ENCODE measurements at regions of chr7 and their contacts with region 1.

Region 1: DNA sequence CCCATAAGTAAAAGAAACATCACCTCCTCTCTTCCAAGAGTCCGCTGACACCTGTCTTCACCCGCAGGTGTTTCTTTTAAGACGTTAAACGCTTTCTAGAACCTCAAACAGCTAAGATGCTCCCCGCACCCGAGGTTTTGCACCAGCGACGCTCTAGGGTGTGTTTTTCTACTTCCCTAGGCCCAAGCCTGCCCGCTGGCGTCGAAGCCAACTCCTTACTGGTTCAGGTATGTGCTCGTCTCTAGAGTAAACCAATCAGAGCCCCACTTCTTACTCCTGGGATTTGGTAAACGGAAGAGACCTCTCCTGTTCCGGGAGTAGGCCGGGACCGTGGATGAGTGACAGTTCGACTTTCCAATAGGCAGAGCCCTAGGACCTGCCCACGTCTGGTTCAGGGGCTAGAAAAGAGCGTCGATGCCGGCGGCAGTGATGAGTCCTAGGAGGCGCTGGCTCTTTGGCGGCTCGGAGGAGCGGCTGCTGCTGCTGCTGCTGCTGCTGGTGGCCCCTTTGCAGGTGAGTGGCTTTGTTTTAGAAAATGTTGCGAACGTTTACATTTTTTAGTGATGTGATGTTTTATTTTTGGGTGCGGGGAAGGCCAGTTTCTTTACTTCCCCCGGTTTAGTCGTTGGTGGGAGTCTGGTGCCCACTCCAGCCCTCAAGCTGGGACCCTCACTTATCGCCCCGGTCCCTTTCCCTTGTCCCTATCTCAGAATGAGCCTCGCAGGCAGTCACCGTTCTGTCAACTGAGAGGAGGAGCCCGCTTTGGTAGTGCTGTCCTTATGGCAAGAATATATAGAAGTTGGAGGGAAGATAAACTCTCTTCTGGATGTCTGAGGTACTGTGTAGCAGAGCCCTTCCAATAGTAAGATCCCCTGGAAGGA is at the start of gene BPGM:
- DNase-seq: peak; percentile 99
- ATAC-seq: peak; percentile 94
- H3K4me3 ChIP-seq: peak within 1 kb of the TSS; percentile 70 to 93 (median 79)
- H3K4me3 Mint-ChIP-seq: no peak within 1 kb of the TSS
- H3K27ac ChIP-seq: peak within 1 kb of the TSS; percentile 84 to 85
- H3K27ac Mint-ChIP-seq: no peak within 1 kb of the TSS
- H3K4me1 ChIP-seq: peaks cover 12 to 26% of the 10 kb centered on the region in 2 donors
- H3K4me1 Mint-ChIP-seq: peaks cover 21% of the 10 kb centered on the region
- H3K27me3 ChIP-seq: no peaks in the 10 kb centered on the region
- H3K27me3 Mint-ChIP-seq: no peaks in the 10 kb centered on the region
- CTCF ChIP-seq: peak; percentile 9
- total RNA-seq, gene BPGM: 8.7 and 9.7 TPM in 2 replicates

Region 2: DNA sequence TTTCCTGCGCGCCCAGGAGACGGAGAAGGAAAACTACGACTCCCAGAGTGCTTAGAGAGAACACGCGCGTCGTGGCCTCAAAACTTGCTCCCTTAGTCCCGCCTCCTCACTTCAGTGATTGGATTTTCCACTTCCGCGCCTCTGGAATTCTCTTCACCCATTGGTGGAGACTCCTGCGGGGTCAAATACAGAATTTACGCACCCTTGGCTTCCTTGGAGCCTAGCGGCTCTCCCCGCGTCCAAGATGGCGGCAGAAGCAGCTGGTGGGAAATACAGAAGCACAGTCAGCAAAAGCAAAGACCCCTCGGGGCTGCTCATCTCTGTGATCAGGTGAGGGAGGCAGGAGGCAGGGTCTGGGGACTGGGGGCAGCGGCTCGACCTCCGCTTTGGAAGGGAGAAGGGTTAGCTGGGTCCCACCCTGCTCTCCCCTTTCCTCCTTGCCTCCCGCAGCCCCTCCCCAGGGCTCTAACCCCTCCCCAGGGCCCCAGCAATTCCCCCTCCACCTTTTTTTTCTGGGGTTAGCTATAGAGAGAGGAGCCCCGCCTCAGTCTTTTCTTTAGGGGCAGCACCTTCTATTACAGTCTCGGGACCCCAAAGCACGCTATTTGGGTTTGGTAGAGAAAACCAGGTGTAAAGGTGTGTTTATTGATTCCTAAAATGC is 1393.7 kb before region 1 on chr7 and contains the start of gene EXOC4:
- CTCF ChIA-PET with region 1: no interaction called
- POLR2A ChIA-PET with region 1: no interaction called
- intact Hi-C with region 1: loop called (anchors 2 kb)
- DNase-seq: peak; percentile 97
- ATAC-seq: peak; percentile 99
- H3K4me3 ChIP-seq: peak within 1 kb of the TSS; percentile 66 to 93 (median 89)
- H3K4me3 Mint-ChIP-seq: peak within 1 kb of the TSS; percentile 89
- H3K27ac ChIP-seq: peak within 1 kb of the TSS; percentile 50 to 85
- H3K27ac Mint-ChIP-seq: peak within 1 kb of the TSS; percentile 91
- H3K4me1 ChIP-seq: peaks cover 4 to 7% of the 10 kb centered on the region in 2 donors
- H3K4me1 Mint-ChIP-seq: peaks cover 28% of the 10 kb centered on the region
- H3K27me3 ChIP-seq: no peaks in the 10 kb centered on the region
- H3K27me3 Mint-ChIP-seq: no peaks in the 10 kb centered on the region
- CTCF ChIP-seq: no peak
- total RNA-seq, gene EXOC4: 132 and 135 TPM in 2 replicates

Region 3: DNA sequence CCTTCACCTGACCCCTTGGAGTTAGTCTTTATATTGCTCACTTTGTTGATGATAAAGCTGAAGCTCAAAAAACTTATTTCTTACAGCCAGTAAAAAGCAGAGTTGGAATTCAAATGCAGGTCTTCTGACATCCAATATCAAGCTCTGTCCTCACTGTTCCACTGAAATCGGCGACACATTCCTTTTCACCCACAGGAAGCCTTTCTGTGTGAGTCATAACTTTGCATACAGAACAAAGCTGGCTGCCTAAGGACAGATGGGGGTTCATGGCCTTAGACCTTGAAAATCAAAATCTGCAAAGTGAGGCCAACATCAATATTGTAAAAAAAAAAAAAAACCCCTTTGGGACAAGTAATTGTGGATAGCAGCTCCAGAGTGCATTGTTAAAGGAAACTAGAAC is 165.9 kb before region 1 on chr7:
- CTCF ChIA-PET with region 1: no interaction called
- POLR2A ChIA-PET with region 1: no interaction called
- intact Hi-C with region 1: no loop called
- DNase-seq: no peak
- ATAC-seq: no peak
- H3K4me3 ChIP-seq: no peak overlapping the region
- H3K4me3 Mint-ChIP-seq: no peak overlapping the region
- H3K27ac ChIP-seq: no peak overlapping the region
- H3K27ac Mint-ChIP-seq: no peak overlapping the region
- H3K4me1 ChIP-seq: no peaks in the 10 kb centered on the region
- H3K4me1 Mint-ChIP-seq: no peaks in the 10 kb centered on the region
- H3K27me3 ChIP-seq: no peaks in the 10 kb centered on the region
- H3K27me3 Mint-ChIP-seq: peaks cover 19% of the 10 kb centered on the region
- CTCF ChIP-seq: no peak

Region 4: GRCh38 chr7:134619627-134620331 is 26.9 kb before region 1 on chr7:
- CTCF ChIA-PET with region 1: no interaction called
- POLR2A ChIA-PET with region 1: no interaction called
- intact Hi-C with region 1: no loop called
- DNase-seq: no peak
- ATAC-seq: no peak
- H3K4me3 ChIP-seq: no peak overlapping the region
- H3K4me3 Mint-ChIP-seq: no peak overlapping the region
- H3K27ac ChIP-seq: no peak overlapping the region
- H3K27ac Mint-ChIP-seq: no peak overlapping the region
- H3K4me1 ChIP-seq: no peaks in the 10 kb centered on the region
- H3K4me1 Mint-ChIP-seq: no peaks in the 10 kb centered on the region
- H3K27me3 ChIP-seq: peaks cover 0 to 8% (median 5%) of the 10 kb centered on the region in 4 experiments
- H3K27me3 Mint-ChIP-seq: peaks cover 44% of the 10 kb centered on the region
- CTCF ChIP-seq: no peak

Region 5: GRCh38 chr7:134632937-134633540 is 13.6 kb before region 1 on chr7:
- CTCF ChIA-PET with region 1: interaction called, 35 read pairs
- POLR2A ChIA-PET with region 1: interaction called, 3 read pairs
- intact Hi-C with region 1: loop called (anchors 1 kb)
- DNase-seq: peak; percentile 66
- ATAC-seq: peak; percentile 68
- H3K4me3 ChIP-seq: no peak overlapping the region
- H3K4me3 Mint-ChIP-seq: no peak overlapping the region
- H3K27ac ChIP-seq: no peak overlapping the region
- H3K27ac Mint-ChIP-seq: no peak overlapping the region
- H3K4me1 ChIP-seq: peaks cover 0 to 3% of the 10 kb centered on the region in 2 donors
- H3K4me1 Mint-ChIP-seq: peaks cover 10% of the 10 kb centered on the region
- H3K27me3 ChIP-seq: peaks cover 0 to 13% (median 3%) of the 10 kb centered on the region in 4 experiments
- H3K27me3 Mint-ChIP-seq: peaks cover 30% of the 10 kb centered on the region
- CTCF ChIP-seq: peak; percentile 79

Region 6: DNA sequence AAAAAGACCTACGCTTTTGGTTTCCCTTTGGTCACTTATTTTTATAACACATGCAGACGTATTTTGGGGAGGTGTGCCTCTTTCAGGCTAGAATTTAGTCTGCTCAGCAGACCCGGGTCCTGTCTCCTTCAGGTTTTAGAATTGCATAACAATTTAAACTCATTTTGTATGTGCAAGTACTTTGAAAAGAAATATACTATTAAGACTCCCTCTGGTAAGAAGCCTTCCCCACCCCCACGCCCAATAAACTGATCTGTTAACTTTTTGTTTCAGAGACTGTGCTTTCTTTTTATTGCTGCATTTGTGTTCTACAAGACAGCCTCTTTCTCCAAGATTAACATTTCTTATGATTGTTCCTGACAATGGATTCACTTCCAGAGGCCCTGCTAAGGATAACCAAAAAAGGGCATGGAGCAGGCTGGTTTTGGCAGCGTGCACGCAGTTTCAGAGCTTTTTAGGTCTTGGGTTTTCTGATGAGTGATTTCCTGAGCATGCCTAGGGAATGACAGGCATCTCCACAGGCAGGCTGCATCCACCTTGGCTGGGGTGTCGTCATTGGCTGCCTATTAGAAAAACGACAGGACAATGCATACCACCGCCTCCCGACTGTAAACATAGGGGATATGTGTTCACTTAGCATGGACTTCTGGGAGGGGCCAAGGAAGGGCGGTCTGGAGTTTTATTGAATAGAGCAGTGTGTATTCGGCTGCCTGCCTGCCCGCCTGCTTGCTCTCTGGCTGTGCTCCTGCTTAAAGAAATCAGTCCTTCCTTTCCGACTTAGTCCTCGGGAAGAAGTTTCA is 132.5 kb after region 1 on chr7 and contains the start of gene CALD1:
- CTCF ChIA-PET with region 1: no interaction called
- POLR2A ChIA-PET with region 1: no interaction called
- intact Hi-C with region 1: no loop called
- DNase-seq: no peak
- ATAC-seq: no peak
- H3K4me3 ChIP-seq: no peak within 1 kb of the TSS
- H3K4me3 Mint-ChIP-seq: no peak within 1 kb of the TSS
- H3K27ac ChIP-seq: no peak within 1 kb of the TSS
- H3K27ac Mint-ChIP-seq: no peak within 1 kb of the TSS
- H3K4me1 ChIP-seq: peaks cover 21% of the 10 kb centered on the region in 2 donors
- H3K4me1 Mint-ChIP-seq: no peaks in the 10 kb centered on the region
- H3K27me3 ChIP-seq: peaks cover 0 to 10% (median 9%) of the 10 kb centered on the region in 4 experiments
- H3K27me3 Mint-ChIP-seq: peaks cover 28% of the 10 kb centered on the region
- CTCF ChIP-seq: no peak
- total RNA-seq, gene CALD1: 0.69 and 1.6 TPM in 2 replicates

Region 7: GRCh38 chr7:134986363-134987251 is 339.9 kb after region 1 on chr7 and contains the start of gene AGBL3:
- CTCF ChIA-PET with region 1: interaction called, 18 read pairs
- POLR2A ChIA-PET with region 1: interaction called, 6 read pairs
- intact Hi-C with region 1: loop called (anchors 1 kb)
- DNase-seq: peak; percentile 95
- ATAC-seq: peak; percentile 86
- H3K4me3 ChIP-seq: peak within 1 kb of the TSS; percentile 69 to 97 (median 94)
- H3K4me3 Mint-ChIP-seq: peak within 1 kb of the TSS; percentile 98
- H3K27ac ChIP-seq: peak within 1 kb of the TSS; percentile 88 to 93
- H3K27ac Mint-ChIP-seq: peak within 1 kb of the TSS; percentile 98
- H3K4me1 ChIP-seq: peaks cover 4 to 5% of the 10 kb centered on the region in 2 donors
- H3K4me1 Mint-ChIP-seq: peaks cover 34% of the 10 kb centered on the region
- H3K27me3 ChIP-seq: no peaks in the 10 kb centered on the region
- H3K27me3 Mint-ChIP-seq: no peaks in the 10 kb centered on the region
- CTCF ChIP-seq: peak; percentile 92
- total RNA-seq, gene AGBL3: 10.9 and 11.1 TPM in 2 replicates

Region 8: DNA sequence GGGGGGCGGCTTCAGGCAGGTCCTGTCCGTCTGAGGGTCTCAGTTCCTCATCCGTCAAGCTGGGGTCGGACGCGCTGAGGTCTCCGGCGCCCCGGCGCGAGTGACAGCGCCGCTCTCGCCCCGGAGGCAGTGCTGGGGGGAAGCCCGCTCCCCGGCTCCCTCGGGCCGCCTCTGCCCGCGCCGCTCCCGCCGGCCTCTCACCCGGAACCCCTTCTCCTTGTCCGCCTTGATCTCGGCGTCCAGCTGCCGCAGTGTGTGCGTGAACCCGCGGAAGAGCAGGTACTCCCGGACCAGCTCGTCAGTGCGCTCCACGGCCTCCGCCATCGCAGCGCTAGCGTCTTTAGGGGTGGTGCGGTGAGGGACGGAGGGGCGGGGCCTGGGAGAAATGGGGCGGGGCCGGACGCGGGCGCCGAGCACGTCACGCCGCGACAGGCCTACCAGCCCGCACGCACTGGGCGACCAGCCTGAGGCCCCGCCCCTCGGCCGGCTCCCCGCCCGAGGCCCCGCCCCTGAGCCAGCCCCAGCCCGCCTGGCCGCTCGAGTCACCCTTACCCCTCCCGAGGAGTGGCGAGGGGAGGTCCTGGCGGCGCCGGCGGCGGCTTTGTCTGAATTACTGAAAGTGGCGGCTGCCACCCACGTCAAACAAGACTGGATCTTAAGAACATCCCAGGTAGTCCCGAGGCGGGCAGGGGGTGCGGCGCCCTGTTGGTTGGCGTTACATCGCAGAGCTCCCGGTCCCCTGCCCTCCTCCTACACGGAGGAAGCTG is 564.7 kb after region 1 on chr7 and contains the start of gene WDR91:
- CTCF ChIA-PET with region 1: interaction called, 3 read pairs
- POLR2A ChIA-PET with region 1: no interaction called
- intact Hi-C with region 1: loop called (anchors 1 kb)
- DNase-seq: peak; percentile 95
- ATAC-seq: peak; percentile 94
- H3K4me3 ChIP-seq: peak within 1 kb of the TSS; percentile 82 to 98 (median 88)
- H3K4me3 Mint-ChIP-seq: peak within 1 kb of the TSS; percentile 98
- H3K27ac ChIP-seq: peak within 1 kb of the TSS; percentile 77 to 92
- H3K27ac Mint-ChIP-seq: peak within 1 kb of the TSS; percentile 97
- H3K4me1 ChIP-seq: peaks cover 34 to 35% of the 10 kb centered on the region in 2 donors
- H3K4me1 Mint-ChIP-seq: peaks cover 48% of the 10 kb centered on the region
- H3K27me3 ChIP-seq: no peaks in the 10 kb centered on the region
- H3K27me3 Mint-ChIP-seq: no peaks in the 10 kb centered on the region
- CTCF ChIP-seq: no peak
- total RNA-seq, gene WDR91: 40.7 and 47.0 TPM in 2 replicates